HepG2 (cell line): ENCODE measurements at regions of chr19 and their contacts with region 1.

Region 1: GRCh38 chr19:48588670-48589399 is 17.7 kb upstream of the SPACA4 start:
- DNase-seq: peak; percentile 59
- ATAC-seq: peak; percentile 80
- H3K4me3 ChIP-seq: peak overlapping the region in 1 of 3 experiments; percentile 62; a peak in 1 of 6 replicates
- H3K27ac ChIP-seq: no peak overlapping the region
- H3K4me1 ChIP-seq: peaks cover 12% of the 10 kb centered on the region
- H3K27me3 ChIP-seq: peaks cover 1 to 3% of the 10 kb centered on the region in 2 experiments; a peak in 2 of 5 replicates
- CTCF ChIP-seq: peak; percentile 95
- EP300 ChIP-seq: no peak
- POLR2A ChIP-seq: no peak
- RAD21 ChIP-seq: peak; percentile 83

Region 2: DNA sequence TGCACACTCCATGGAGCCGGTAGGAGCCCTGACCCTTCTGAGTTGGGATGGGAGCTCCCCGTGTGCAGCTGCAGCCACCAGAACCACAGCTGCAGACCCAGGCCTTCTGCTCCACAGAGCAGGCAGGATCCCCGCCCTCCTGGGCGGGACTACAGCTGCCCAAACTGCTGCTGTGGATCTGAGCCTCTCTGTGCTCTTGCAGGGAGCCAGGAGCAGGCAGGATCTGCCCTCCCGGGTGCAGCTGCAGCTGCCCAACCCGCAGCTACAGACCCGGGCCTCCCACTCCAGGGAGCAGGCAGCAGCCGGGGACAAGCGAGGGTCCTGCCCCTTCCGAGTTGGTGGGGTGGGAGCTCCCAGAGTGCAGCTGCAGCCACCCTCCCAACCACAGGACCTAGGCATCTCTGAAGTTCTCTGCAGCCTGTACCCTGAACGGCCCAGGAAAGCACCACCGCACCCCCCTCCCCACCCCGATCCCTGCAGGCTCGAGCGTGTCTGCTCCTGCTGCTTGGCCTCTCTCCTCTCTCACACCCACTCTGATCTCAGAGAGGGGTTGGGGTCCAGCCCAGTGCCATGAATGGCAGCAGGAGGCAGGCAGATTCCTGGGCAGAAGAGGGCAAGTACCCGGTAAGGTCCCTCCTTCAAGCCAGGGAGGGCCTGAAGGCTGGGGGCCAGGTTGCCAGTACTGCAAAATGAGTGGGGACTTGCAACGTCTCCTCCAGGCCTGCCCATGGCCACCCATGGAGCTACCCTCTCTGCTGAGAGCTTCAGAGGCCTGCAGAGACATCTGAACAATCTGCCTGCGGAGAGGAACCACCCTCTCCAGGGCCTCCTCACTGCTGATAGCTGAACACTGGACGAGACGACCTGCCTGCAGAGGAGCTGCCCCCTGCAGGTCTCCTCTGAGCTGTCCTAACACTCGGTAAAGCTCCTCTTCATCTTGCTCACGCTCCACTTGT is 279.9 kb before region 1 on chr19:
- CTCF ChIA-PET with region 1: no interaction called
- POLR2A ChIA-PET with region 1: no interaction called
- in situ Hi-C with region 1: loop called (anchors 10 kb)
- intact Hi-C with region 1: loop called (anchors 10 kb)
- DNase-seq: peak; percentile 71
- ATAC-seq: peak; percentile 98
- H3K4me3 ChIP-seq: peak overlapping the region; percentile 49 to 75 (median 57)
- H3K27ac ChIP-seq: no peak overlapping the region
- H3K4me1 ChIP-seq: peaks cover 30% of the 10 kb centered on the region
- H3K27me3 ChIP-seq: peaks cover 0 to 18% of the 10 kb centered on the region in 2 experiments; a peak in 4 of 5 replicates
- CTCF ChIP-seq: peak; percentile 87
- EP300 ChIP-seq: no peak
- POLR2A ChIP-seq: no peak
- RAD21 ChIP-seq: peak; percentile 49; the same call in 1 of the 2 replicates

Region 3: GRCh38 chr19:48489608-48490216 is 99.1 kb before region 1 on chr19:
- CTCF ChIA-PET with region 1: interaction called, 18 read pairs
- POLR2A ChIA-PET with region 1: interaction called, 10 read pairs
- in situ Hi-C with region 1: no loop called
- intact Hi-C with region 1: loop called (anchors 1 kb)
- DNase-seq: peak; percentile 47
- ATAC-seq: peak; percentile 67
- H3K4me3 ChIP-seq: no peak overlapping the region
- H3K27ac ChIP-seq: no peak overlapping the region
- H3K4me1 ChIP-seq: peaks cover 36% of the 10 kb centered on the region
- H3K27me3 ChIP-seq: no peaks in the 10 kb centered on the region
- CTCF ChIP-seq: peak; percentile 93
- EP300 ChIP-seq: no peak
- POLR2A ChIP-seq: no peak
- RAD21 ChIP-seq: peak; percentile 88

Region 4: GRCh38 chr19:48501496-48502350 is 87.1 kb before region 1 on chr19:
- CTCF ChIA-PET with region 1: interaction called, 61 read pairs
- POLR2A ChIA-PET with region 1: interaction called, 6 read pairs
- in situ Hi-C with region 1: loop called (anchors 5 kb)
- intact Hi-C with region 1: loop called (anchors 1 kb)
- DNase-seq: peak; percentile 86
- ATAC-seq: peak; percentile 64
- H3K4me3 ChIP-seq: peak overlapping the region; percentile 58 to 85 (median 60)
- H3K27ac ChIP-seq: no peak overlapping the region
- H3K4me1 ChIP-seq: peaks cover 47% of the 10 kb centered on the region
- H3K27me3 ChIP-seq: peaks cover 0 to 9% of the 10 kb centered on the region in 2 experiments; a peak in 1 of 5 replicates
- CTCF ChIP-seq: 0 out of 2 replicates have a peak, but pooled peaks have one; percentile 1
- EP300 ChIP-seq: no peak
- POLR2A ChIP-seq: peak in 1 of 2 experiments; percentile 55; a peak in 1 of 4 replicates
- RAD21 ChIP-seq: no peak

Region 5: DNA sequence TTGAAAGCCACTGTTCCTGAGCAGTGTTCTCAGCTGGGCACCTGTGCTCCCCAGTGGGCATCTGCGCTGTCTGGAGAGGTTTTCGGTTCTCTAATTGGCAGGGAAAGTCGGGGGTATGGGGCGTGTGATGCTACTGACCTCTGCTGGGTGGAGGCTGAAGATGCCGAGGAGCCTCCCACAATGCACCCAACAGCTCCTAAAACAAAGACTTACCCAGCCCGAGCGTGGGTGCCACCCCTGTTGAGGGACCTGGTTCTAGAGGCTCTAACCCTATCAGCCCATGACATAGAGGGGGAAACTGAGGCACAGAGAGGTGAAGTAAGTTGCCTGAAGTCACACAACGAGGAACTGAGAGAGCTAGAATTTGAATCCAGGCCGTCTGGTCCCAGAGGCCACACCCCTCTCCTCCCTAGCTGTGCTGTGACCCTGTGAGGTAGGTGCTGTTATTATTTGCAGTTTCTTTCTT is 20.0 kb after region 1 on chr19:
- CTCF ChIA-PET with region 1: interaction called, 10 read pairs
- POLR2A ChIA-PET with region 1: interaction called, 3 read pairs
- in situ Hi-C with region 1: no loop called
- intact Hi-C with region 1: no loop called
- DNase-seq: peak; percentile 42
- ATAC-seq: peak; percentile 52
- H3K4me3 ChIP-seq: peak overlapping the region in 1 of 3 experiments; percentile 56; a peak in 2 of 6 replicates
- H3K27ac ChIP-seq: no peak overlapping the region
- H3K4me1 ChIP-seq: peaks cover 21% of the 10 kb centered on the region
- H3K27me3 ChIP-seq: no peaks in the 10 kb centered on the region; a peak in 1 of 5 replicates
- CTCF ChIP-seq: peak; percentile 89
- EP300 ChIP-seq: no peak
- POLR2A ChIP-seq: no peak
- RAD21 ChIP-seq: peak; percentile 75

Region 6: DNA sequence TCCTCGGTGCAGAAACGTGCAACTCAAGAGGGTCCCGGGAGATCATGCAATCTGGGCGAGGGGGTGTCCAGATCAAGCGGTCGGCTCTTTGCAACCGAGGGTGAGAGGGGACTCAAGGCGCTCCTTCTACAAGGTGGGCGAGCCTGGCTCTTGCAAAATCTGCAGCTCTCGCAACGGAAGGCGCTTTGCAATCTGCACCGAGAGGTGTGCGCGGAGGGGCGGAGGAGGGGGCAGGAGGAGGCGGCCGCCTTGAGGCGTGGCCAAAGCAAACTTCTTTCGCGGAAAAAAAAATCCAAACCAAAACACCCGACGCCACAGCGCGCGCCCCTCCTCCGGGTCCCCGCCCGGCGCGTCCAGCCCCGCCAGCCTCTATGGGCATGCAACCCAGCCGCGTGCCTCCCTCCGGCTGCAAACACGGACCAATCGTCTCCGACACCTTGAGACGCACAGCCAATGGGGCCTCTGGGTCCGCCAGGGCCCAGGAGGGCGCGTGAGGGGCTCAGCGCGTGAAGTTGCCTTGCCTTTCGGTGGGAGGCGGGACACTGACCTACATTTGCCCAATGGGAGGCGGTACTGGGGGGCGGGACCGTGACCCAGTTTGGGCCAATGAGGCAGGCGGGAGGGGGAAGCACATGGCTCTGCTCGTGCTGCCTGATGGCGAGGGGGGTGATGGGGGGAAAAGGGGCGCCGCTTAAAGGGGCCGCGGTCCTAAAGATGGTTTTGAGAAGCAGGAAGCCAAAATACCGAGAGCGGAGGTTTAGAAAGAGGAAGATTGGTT is 48.5 kb after region 1 on chr19 and contains the start of gene DBP:
- CTCF ChIA-PET with region 1: no interaction called
- POLR2A ChIA-PET with region 1: no interaction called
- in situ Hi-C with region 1: no loop called
- intact Hi-C with region 1: no loop called
- DNase-seq: peak; percentile 96
- ATAC-seq: peak; percentile 85
- H3K4me3 ChIP-seq: peak within 1 kb of the TSS; percentile 56 to 76 (median 59)
- H3K27ac ChIP-seq: peak within 1 kb of the TSS; percentile 70
- H3K4me1 ChIP-seq: peaks cover 71% of the 10 kb centered on the region
- H3K27me3 ChIP-seq: peaks cover 0 to 8% of the 10 kb centered on the region in 2 experiments; a peak in 3 of 5 replicates
- CTCF ChIP-seq: no peak
- EP300 ChIP-seq: 0 out of 4 replicates have a peak, but pooled peaks of 1 of the 2 experiments have one; percentile 20
- POLR2A ChIP-seq: peak in 1 of 2 experiments; percentile 47; a peak in 2 of 4 replicates
- RAD21 ChIP-seq: no peak
- total RNA-seq, gene DBP: 5.5 and 5.8 TPM in 2 replicates